ENCODE measurements at regions of chr11 and their contacts with region 1.

Region 1: DNA sequence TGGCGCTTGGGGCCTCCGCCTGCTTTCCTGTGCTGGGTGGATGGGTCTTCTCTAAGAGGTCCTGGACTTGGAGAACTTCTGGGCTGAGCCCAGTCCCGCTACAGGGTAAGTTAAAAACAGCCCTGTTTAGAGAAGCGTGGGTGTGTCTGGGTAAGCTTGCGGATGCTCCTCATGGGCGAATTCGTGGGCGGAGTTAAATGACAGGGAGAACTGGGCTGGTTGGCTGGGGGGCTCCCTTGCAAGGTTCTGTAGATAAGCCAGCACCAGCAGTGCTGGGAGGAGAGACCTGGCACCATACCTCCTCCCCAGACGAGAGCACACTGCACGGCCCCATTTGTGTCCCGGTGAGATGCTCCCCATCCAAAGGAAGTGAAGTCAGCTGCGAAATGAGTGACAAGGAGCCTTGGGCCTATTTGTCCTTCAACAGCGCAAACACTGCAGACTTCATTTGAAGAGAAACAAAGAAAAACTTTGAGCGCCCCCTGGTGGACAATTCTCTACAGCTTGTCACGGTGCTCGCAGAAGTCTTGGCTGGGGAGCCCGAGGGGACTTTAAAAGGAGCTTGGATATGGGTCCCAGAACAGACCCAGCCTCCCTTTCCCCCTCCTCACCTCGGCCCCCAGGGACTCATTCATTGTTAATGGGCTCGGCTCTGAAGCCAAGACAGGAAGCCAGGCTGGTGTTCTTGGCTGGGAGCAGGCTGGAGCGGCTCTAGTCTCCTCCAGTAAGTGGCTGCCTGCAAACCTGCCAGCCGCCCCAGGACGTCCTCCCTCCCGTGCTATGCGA is 39.5 kb downstream of the TP53I11 start:
- H3K4me3 ChIP-seq: no peak overlapping the region
- H3K27ac ChIP-seq: no peak overlapping the region
- H3K4me1 ChIP-seq: no peaks in the 10 kb centered on the region
- CTCF ChIP-seq: peak; percentile 37; the same call in 1 of the 2 replicates

Region 2: DNA sequence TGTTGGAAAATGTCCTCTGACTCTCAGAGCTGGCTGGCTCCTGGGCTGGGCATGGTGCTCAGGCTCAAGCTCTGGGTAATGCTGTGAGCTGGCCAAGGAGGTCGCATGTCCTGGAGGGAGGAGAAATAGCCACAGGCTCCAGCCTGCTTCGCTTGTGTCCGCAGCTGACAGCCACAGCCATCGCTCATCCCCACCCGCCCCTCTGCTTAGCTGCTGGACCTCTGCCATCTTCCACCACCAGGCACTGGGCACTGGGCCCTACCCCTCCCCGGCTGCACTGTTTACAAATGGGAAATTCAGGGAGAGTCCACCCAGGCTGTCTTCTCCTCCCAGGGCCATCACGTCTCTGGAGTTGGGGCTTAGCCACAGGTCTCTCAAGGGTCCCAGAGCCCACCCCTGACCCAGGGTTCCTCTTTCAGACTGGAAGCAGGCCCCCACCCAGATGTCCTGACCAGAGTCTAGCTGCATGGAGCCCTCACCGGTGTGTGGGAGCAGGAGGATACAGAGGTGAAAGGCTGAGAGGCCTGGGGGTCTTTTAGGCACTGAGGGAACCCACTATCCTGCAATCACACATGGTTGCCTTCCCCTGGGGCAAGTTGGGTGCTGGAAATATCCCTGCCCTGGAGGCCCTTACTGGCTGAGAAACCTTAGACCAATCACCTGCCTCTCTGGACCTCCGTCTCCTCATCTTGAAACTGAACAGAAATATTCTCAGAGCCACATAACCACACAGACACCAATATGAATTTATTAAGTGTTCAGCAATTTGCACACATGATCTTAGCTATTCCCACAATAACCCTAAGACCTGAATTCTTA is 283.1 kb before region 1 on chr11:
- CTCF ChIA-PET with region 1: interaction called, 82 read pairs
- POLR2A ChIA-PET with region 1: no interaction called
- H3K4me3 ChIP-seq: no peak overlapping the region
- H3K27ac ChIP-seq: no peak overlapping the region
- H3K4me1 ChIP-seq: no peaks in the 10 kb centered on the region
- CTCF ChIP-seq: no peak

Region 3: DNA sequence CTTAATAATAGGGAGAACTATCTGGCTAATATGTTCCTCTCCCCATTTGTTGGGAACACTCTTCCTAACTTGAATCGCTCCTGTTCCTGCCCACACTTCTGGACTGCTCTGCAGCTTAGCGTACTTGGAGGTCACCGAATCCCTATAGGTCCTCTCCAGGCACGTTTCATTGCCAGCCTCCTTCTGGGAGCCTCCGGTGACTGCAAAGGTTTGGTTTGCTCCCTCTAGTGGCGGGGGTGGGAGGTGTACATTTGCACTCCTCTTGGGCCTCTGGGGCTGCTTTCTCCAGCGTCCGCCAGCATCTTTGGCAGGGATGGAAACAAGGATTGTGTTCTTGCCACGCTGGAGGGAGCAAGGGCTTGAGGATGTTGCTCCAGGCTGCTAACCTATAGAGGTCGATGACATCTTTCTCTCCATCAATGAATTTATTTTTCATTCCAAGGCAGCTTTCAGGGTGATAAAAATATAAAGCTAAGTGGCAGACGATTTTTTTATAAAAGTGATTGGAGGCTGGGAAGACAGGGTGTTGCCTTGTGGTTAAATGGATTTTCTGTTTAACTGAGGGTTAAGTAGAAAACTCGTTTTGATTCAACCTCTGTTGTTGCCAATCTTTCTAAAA is 135.7 kb before region 1 on chr11:
- CTCF ChIA-PET with region 1: interaction called, 17 read pairs
- POLR2A ChIA-PET with region 1: no interaction called
- H3K4me3 ChIP-seq: no peak overlapping the region
- H3K27ac ChIP-seq: no peak overlapping the region
- H3K4me1 ChIP-seq: no peaks in the 10 kb centered on the region
- CTCF ChIP-seq: peak; percentile 61; the same call in 1 of the 2 replicates

Region 4: DNA sequence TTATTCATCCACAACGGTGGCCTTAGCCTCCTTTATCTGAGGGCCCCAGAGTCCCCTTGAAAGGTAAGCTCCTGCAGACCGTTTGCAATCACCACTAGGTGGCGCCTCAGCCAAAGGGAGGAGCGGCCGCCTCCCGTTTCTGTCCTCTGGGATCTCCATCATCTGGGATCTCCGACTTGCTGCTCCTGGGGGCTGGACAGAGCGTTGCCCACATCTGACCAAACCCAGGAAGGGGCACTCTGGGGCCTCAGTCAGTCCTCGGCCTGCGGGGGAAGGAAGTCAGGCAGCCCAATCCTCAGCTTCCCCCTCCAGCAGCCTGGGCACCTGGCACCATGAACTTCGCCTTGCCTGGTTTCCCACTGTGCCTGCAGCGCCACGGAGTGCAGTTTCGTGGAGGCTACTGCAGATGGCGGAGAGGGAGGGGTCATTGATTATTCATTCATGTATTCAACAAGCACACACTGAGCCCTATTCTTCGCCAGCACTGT is 16.0 kb after region 1 on chr11:
- CTCF ChIA-PET with region 1: interaction called, 15 read pairs
- POLR2A ChIA-PET with region 1: no interaction called
- H3K4me3 ChIP-seq: no peak overlapping the region
- H3K27ac ChIP-seq: no peak overlapping the region
- H3K4me1 ChIP-seq: no peaks in the 10 kb centered on the region
- CTCF ChIP-seq: peak; percentile 70

Region 5: DNA sequence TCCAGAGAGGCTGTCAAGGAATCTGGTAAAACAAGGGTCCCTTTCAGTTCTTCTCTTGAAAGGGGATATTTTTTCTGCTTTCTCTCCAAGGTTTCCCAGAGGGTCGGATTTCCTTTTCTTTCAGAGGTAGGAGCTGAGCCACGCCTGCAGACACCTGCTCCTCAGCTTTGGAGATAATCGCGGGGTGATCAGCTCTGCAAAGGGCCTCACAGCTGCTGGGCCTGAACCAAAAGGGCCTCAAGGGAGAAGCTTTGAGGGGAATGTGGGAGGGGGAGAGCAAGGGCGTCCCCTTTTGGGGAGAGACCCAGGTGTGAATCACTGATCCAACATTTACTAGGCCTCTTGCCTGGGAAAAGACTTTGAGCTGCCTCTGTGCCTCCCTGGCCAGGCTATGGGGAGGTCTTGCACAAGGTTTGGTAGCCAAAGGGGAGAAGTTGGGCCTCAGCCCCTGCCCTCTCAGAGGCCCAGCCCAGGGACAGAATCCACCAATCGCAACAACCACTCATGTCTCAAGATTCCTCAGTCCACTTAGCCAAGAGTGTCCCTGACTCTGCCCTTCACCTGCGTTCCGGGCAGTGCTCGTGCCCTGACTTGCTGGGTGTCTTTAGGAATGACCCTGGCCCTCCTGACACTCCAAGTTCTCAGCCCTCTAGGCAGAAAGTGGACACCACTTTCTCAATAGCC is 53.4 kb after region 1 on chr11:
- CTCF ChIA-PET with region 1: no interaction called
- POLR2A ChIA-PET with region 1: no interaction called
- H3K4me3 ChIP-seq: no peak overlapping the region
- H3K27ac ChIP-seq: no peak overlapping the region
- H3K4me1 ChIP-seq: no peaks in the 10 kb centered on the region
- CTCF ChIP-seq: no peak